ENCODE measurements at regions of chr3 and their contacts with region 1.

Region 1: GRCh38 chr3:122679085-122679881 is 1.4 kb upstream of the PARP14 start:
- DNase-seq: peak in 1 of 2 experiments; percentile 80
- H3K4me3 ChIP-seq: peak overlapping the region; percentile 91; the same call in 1 of the 2 replicates
- H3K27ac ChIP-seq: no peak overlapping the region
- H3K4me1 ChIP-seq: peaks cover 24% of the 10 kb centered on the region
- H3K27me3 ChIP-seq: no peaks in the 10 kb centered on the region
- CTCF ChIP-seq: peak; percentile 84

Region 2: GRCh38 chr3:121545574-121546455 is 1133.5 kb before region 1 on chr3 and contains the start of gene POLQ:
- CTCF ChIA-PET with region 1: interaction called, 4 read pairs
- POLR2A ChIA-PET with region 1: no interaction called
- intact Hi-C with region 1: loop called (anchors 5 kb)
- DNase-seq: peak; percentile 85 to 88
- H3K4me3 ChIP-seq: peak within 1 kb of the TSS; percentile 62
- H3K27ac ChIP-seq: peak within 1 kb of the TSS; percentile 24; the same call in 1 of the 2 replicates
- H3K4me1 ChIP-seq: peaks cover 8% of the 10 kb centered on the region; the same call in 1 of the 2 replicates
- H3K27me3 ChIP-seq: no peaks in the 10 kb centered on the region
- CTCF ChIP-seq: no peak
- total RNA-seq, gene POLQ: 14.3 and 15.6 TPM in 2 replicates

Region 3: DNA sequence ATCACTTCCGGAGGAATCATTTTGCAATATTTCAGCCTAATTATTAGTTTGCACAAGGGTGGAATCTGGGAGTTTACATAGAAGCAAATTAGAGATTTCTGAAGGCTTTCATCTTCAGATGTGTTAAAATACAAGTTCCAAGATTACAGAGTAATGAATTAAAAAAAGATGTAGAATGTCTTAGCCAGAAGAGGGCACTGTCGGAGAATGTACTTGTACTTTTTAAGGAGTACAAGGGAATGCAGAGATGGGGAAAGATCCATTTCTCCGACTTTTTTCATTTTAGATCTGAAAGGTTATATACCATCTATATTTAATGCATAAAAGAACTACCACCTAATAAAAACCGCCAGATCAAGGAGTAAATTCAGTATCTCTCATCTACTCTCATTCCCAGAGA is 220.3 kb before region 1 on chr3:
- CTCF ChIA-PET with region 1: no interaction called
- POLR2A ChIA-PET with region 1: no interaction called
- intact Hi-C with region 1: loop called (anchors 1 kb)
- DNase-seq: no peak
- H3K4me3 ChIP-seq: no peak overlapping the region
- H3K27ac ChIP-seq: no peak overlapping the region
- H3K4me1 ChIP-seq: no peaks in the 10 kb centered on the region
- H3K27me3 ChIP-seq: no peaks in the 10 kb centered on the region
- CTCF ChIP-seq: peak; percentile 72

Region 4: DNA sequence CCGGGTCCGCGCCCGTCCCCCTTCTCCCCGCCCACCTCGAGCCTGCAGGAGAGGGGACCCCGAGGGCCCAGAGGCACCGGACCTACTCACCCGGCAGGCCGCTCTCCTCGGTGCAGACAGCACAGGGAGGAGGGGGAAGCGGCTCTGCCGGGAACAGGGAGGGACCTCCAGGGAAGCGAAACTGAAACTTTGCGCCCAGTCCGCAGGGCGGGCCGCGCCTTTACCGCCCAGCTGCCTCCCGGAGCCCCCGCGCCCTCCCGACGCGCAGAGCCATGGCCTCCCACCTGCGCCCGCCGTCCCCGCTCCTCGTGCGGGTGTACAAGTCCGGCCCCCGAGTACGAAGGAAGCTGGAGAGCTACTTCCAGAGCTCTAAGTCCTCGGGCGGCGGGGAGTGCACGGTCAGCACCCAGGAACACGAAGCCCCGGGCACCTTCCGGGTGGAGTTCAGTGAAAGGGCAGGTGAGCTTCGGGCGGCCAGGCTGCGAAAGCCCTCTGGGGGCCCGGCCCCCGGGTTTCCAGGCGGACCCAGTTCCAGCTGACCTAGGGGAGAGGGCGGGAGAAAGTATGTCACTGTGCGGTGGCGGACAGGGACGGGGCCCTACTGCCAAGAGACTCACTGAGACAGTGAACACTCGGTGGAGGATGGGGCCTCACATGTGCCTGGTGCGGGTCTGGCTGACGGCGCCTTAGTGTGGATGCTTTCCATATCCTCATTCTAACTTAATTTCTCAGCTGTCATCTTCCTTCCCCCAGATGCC is 114.9 kb before region 1 on chr3 and contains the starts of genes DTX3L and PARP9:
- CTCF ChIA-PET with region 1: interaction called, 6 read pairs
- POLR2A ChIA-PET with region 1: interaction called, 4 read pairs
- intact Hi-C with region 1: loop called (anchors 1 kb)
- DNase-seq: peak; percentile 64 to 82
- H3K4me3 ChIP-seq: peak within 1 kb of the TSS; percentile 85
- H3K27ac ChIP-seq: peak within 1 kb of the TSS; percentile 72
- H3K4me1 ChIP-seq: peaks cover 14% of the 10 kb centered on the region; the same call in 1 of the 2 replicates
- H3K27me3 ChIP-seq: no peaks in the 10 kb centered on the region
- CTCF ChIP-seq: no peak
- total RNA-seq, gene DTX3L: 30.0 and 41.7 TPM in 2 replicates
- total RNA-seq, gene PARP9: 15.0 and 21.1 TPM in 2 replicates

Region 5: GRCh38 chr3:122635789-122636188 is 43.5 kb before region 1 on chr3:
- CTCF ChIA-PET with region 1: no interaction called
- POLR2A ChIA-PET with region 1: no interaction called
- intact Hi-C with region 1: no loop called
- DNase-seq: peak in 1 of 2 experiments; percentile 3
- H3K4me3 ChIP-seq: no peak overlapping the region
- H3K27ac ChIP-seq: no peak overlapping the region
- H3K4me1 ChIP-seq: no peaks in the 10 kb centered on the region
- H3K27me3 ChIP-seq: 0 out of 2 replicates have a peak, but pooled peaks cover 3% of the 10 kb centered on the region
- CTCF ChIP-seq: no peak

Region 6: DNA sequence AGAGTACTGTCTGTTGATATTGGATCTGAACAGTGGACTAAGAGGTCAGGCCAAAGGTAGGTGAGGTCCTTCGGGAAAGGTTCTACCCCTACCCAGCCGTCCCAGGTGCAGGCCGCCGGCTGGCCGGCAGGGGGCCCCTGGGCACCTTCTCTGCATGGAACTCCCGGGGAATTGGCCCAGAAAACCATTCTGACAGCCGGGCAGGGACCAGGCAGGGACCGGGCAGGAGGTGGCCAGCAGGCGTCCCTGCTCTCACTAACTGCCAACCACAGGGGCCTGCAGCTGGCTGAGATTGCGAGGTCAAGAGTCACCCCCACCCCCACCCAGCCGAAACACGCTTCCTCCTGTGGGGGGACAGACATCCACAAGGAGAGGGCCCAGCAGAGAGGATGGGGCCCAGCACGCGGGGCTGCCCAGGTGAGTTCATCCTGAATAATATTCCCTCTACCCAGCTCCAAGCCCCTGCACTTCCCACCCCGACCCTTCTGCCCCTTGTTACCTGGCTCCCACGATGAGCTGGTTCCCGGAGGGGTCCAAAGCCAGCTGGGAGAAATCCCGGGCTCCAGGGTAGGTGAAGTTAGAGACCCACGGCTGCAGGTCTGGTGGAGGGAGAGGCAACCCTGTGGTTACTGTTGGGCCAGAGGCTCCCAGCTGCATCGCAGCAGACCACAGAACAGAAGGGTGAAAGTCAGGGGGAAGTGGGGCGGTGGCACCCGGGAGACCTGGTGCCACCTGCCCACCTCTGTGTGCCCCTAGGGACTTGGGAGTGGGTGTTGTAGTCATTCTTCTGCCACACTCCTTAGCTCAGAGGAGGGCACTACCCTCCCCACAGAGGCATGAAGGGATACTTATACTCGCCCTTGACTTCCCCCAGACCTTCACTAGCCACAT is 263.9 kb after region 1 on chr3:
- CTCF ChIA-PET with region 1: no interaction called
- POLR2A ChIA-PET with region 1: no interaction called
- intact Hi-C with region 1: loop called (anchors 5 kb)
- DNase-seq: peak; percentile 64 to 83
- H3K4me3 ChIP-seq: no peak overlapping the region
- H3K27ac ChIP-seq: no peak overlapping the region
- H3K4me1 ChIP-seq: peaks cover 34% of the 10 kb centered on the region
- H3K27me3 ChIP-seq: no peaks in the 10 kb centered on the region
- CTCF ChIP-seq: peak; percentile 94

Region 7: GRCh38 chr3:123576122-123576521 is 896.8 kb after region 1 on chr3:
- CTCF ChIA-PET with region 1: no interaction called
- POLR2A ChIA-PET with region 1: interaction called, 32 read pairs
- intact Hi-C with region 1: no loop called
- DNase-seq: no peak
- H3K4me3 ChIP-seq: no peak overlapping the region
- H3K27ac ChIP-seq: 0 out of 2 replicates have a peak overlapping the region, but pooled peaks have one; percentile 11
- H3K4me1 ChIP-seq: no peaks in the 10 kb centered on the region
- H3K27me3 ChIP-seq: no peaks in the 10 kb centered on the region
- CTCF ChIP-seq: no peak

Measured in PC-9 (cell line).